ENCODE measurements at regions of chr5 and their contacts with region 1.

Region 1: DNA sequence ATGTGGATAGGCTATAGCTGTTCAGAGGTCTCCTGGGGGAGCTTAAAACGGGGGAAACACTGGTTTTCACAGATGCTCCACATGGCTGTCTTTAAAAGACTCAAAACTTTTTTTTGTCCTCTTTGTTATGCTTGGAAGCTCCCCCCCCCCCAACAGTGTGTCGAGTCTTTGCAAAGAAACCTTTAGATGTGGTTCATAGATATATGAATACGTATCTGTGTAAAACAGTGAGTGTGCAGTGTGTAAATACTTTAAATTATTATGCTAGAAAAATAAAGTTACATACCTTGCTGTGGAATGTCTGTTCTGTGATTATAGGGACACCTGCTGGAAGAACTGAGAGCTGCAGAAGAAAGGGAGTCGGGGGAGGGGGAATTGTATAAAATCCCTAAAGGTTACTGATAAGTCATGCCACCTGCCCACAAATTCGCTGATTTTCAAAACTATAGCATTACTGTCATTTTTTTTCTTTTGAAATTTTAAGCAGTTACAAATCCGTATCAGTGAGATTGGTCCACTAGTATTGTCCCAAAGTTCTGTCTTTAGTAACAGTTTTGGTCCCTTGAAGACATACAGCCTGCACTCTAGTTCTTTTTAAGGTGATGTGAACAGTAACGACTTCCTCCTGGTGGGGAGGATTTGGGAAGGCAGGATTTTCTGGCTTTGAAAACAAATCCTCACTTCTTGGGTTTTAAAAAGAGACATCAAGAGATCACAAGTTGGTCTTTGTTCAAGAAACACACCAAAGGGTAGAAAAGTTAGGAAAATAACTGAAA is 22.9 kb downstream of the RGMB start:
- DNase-seq: peak; percentile 42
- ATAC-seq: no peak
- H3K4me3 Mint-ChIP-seq: no peak overlapping the region
- H3K27ac Mint-ChIP-seq: no peak overlapping the region
- H3K4me1 Mint-ChIP-seq: no peaks in the 10 kb centered on the region
- H3K27me3 Mint-ChIP-seq: peaks cover 2% of the 10 kb centered on the region

Region 2: DNA sequence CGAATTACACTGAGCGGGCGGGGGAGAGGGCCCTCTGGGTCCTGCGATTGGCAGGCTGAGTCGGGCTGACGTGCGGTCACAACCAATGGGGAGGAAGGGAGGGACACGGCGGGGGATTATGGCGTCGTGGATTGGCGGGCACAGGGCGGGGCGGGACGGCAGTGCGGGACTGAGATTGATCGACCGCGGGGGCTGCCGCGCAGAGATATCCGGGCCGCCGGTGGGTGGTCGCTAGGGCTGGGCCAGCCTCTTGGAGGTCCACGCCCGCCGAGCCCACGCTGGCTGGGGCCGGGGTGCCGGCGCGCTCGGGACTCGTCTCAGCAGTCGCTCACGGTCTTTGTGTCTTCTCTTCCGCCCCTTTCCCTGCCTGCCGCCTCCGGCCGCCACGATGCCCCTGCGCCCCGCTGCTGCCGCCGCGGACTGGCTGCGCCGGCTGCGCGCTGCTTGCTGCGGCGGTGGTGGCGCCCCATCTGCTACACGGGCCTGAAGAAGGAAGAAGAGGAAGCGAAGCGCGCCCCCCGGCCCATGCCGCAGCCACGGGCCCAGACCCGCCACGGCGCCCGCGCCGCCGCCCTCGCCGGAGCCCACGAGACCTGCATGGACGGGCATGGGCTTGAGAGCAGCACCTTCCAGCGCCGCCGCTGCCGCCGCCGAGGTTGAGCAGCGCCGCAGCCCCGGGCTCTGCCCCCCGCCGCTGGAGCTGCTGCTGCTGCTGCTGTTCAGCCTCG is 22.8 kb before region 1 on chr5 and contains the start of gene RGMB:
- CTCF ChIA-PET with region 1: interaction called, 71 read pairs
- POLR2A ChIA-PET with region 1: no interaction called
- DNase-seq: peak; percentile 87
- ATAC-seq: peak; percentile 90
- H3K4me3 Mint-ChIP-seq: peak within 1 kb of the TSS; percentile 88
- H3K27ac Mint-ChIP-seq: no peak within 1 kb of the TSS
- H3K4me1 Mint-ChIP-seq: peaks cover 44% of the 10 kb centered on the region
- H3K27me3 Mint-ChIP-seq: peaks cover 62% of the 10 kb centered on the region
- total RNA-seq, gene RGMB: 0.13 to 0.16 TPM

Region 3: GRCh38 chr5:98780390-98780789 is 16.0 kb before region 1 on chr5:
- CTCF ChIA-PET with region 1: interaction called, 14 read pairs
- POLR2A ChIA-PET with region 1: no interaction called
- DNase-seq: no peak
- ATAC-seq: no peak
- H3K4me3 Mint-ChIP-seq: no peak overlapping the region
- H3K27ac Mint-ChIP-seq: no peak overlapping the region
- H3K4me1 Mint-ChIP-seq: no peaks in the 10 kb centered on the region
- H3K27me3 Mint-ChIP-seq: peaks cover 17% of the 10 kb centered on the region

Measured in activated CD8-positive, alpha-beta T cell treated with anti-CD3 and anti-CD28 coated beads, Interleukin-2, amount 10 ng/mL, durations not matched to agents 7 days and 5 days (primary cell).